Tibial artery (tissue), 4 donors: ENCODE measurements at regions of chr9 and their contacts with region 1.

Region 1: GRCh38 chr9:111759762-111760639 is 34.7 kb downstream of the SHOC1 start:
- DNase-seq: peak in 1 of 2 donors; percentile 30
- H3K4me3 ChIP-seq: no peak overlapping the region
- H3K27ac ChIP-seq: no peak overlapping the region
- H3K4me1 ChIP-seq: no peaks in the 10 kb centered on the region
- H3K27me3 ChIP-seq: no peaks in the 10 kb centered on the region
- CTCF ChIP-seq: peak; percentile 54 to 78

Region 2: DNA sequence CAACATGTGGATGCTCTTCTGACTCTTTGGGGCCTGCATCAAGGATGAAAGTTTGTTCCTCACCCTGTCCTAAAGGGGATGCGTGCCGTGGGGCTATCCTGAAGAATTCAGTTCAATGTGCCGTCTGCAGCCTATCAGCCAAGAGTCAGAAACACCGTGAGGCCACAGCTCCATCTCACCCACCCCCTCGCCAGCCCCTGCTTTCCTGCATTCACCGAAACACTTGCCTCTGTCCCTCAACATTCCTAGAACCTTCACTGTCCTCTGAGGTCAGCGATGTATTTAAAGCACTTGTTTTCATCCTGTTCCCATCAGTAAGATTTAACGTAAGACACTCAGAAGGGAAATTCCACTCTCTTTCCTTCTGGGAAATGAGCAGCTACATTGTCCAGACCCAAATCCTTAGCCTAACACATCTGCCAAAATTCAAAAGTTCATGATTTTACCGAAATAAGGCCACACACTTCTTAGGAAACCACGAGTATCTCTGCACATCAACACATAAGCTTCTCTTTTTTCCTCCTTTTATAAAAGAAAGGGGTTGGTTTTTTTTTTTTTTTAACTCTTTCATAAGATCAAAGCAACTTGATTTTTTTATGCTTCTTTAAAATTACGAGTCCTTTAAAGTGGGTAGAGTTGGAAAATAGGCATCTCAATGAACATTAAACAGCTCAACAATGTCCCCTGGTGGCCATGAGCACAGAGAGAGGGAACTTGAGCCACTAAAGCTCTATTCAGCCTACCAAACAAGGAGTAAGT is 314.4 kb after region 1 on chr9:
- intact Hi-C with region 1: loop called (anchors 2 kb)
- DNase-seq: peak in 1 of 2 donors; percentile 62
- H3K4me3 ChIP-seq: no peak overlapping the region
- H3K27ac ChIP-seq: peak overlapping the region; percentile 9 to 17
- H3K4me1 ChIP-seq: peaks cover 0 to 13% (median 0%) of the 10 kb centered on the region in 4 donors
- H3K27me3 ChIP-seq: no peaks in the 10 kb centered on the region
- CTCF ChIP-seq: peak; percentile 89 to 96